Adrenal gland (tissue), 19 donors: ENCODE measurements at regions of chr5 and their contacts with region 1.

Region 1: GRCh38 chr5:140244525-140245025 is 58.3 kb downstream of the PFDN1 start:
- DNase-seq: peak; percentile 92 to 97 (median 96)
- H3K4me3 ChIP-seq: no peak overlapping the region
- H3K27ac ChIP-seq: peak overlapping the region in 1 of 5 donors; percentile 3
- H3K4me1 ChIP-seq: peaks cover 40 to 62% of the 10 kb centered on the region in 2 donors
- H3K27me3 ChIP-seq: no peaks in the 10 kb centered on the region
- CTCF ChIP-seq: peak; percentile 81 to 98 (median 92)
- POLR2A ChIP-seq: no peak

Region 2: GRCh38 chr5:140169410-140169809 is 75.2 kb before region 1 on chr5:
- intact Hi-C with region 1: loop called in 1 of 2 experiments (anchors 5 kb)
- DNase-seq: peak in 1 of 7 donors; percentile 20
- H3K4me3 ChIP-seq: no peak overlapping the region
- H3K27ac ChIP-seq: no peak overlapping the region
- H3K4me1 ChIP-seq: peaks cover 13 to 16% of the 10 kb centered on the region in 2 donors
- H3K27me3 ChIP-seq: no peaks in the 10 kb centered on the region
- CTCF ChIP-seq: peak in 4 of 6 experiments; percentile 21 to 33 (median 27)
- POLR2A ChIP-seq: no peak

Region 3: DNA sequence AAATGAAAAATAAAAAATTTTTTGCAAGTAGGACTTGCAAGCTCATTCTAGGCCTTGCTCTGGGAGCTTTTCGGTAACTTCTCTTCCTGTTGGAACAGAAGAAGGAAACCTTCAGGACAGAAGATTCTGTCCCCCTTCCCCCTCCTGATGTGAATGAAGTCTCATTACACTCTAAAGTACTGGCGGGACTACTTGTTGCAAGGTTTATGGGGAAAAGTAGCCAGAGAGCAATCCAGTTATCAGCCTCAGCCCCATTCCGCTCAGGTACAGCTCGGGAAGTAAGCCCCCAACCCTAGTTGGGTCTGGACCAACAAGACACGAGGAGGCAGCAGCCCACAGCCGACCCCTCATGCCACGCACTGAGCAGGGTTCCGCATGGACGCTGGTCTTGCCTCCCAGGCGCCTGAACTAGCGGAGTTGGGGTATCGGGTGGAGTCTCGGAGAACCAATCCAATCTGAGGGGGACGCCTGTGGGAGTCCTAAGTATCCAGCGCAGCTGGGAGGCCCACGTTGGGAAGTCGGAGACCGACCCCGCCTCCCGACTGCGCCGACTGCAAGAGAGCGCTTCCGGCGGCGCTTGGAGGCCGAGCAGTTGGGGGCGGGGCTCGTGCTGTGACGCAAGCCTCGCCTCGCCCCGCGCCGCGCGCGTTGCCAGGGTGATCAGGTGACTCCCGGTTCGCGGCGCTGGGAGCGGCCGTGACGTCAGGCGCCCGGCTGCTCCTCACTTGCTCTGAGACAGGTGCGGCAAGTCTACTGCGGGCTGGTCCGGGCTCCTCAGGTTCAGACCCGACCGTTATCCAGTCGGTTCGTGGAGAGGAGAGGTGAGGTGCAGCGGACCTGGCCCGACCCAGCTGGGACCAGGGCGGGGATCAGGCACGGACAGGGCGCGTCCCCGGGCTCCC is 69.9 kb before region 1 on chr5 and contains the start of gene CYSTM1:
- intact Hi-C with region 1: loop called (anchors 5 kb)
- DNase-seq: peak; percentile 95 to 98 (median 98)
- H3K4me3 ChIP-seq: peak within 1 kb of the TSS; percentile 62 to 96 (median 79)
- H3K27ac ChIP-seq: peak within 1 kb of the TSS; percentile 90 to 99 (median 97)
- H3K4me1 ChIP-seq: peaks cover 18 to 36% of the 10 kb centered on the region in 2 donors
- H3K27me3 ChIP-seq: no peaks in the 10 kb centered on the region
- CTCF ChIP-seq: no peak
- POLR2A ChIP-seq: peak; percentile 52 to 93
- total RNA-seq, gene CYSTM1: 42.6 to 605 (median 180) TPM

Region 4: DNA sequence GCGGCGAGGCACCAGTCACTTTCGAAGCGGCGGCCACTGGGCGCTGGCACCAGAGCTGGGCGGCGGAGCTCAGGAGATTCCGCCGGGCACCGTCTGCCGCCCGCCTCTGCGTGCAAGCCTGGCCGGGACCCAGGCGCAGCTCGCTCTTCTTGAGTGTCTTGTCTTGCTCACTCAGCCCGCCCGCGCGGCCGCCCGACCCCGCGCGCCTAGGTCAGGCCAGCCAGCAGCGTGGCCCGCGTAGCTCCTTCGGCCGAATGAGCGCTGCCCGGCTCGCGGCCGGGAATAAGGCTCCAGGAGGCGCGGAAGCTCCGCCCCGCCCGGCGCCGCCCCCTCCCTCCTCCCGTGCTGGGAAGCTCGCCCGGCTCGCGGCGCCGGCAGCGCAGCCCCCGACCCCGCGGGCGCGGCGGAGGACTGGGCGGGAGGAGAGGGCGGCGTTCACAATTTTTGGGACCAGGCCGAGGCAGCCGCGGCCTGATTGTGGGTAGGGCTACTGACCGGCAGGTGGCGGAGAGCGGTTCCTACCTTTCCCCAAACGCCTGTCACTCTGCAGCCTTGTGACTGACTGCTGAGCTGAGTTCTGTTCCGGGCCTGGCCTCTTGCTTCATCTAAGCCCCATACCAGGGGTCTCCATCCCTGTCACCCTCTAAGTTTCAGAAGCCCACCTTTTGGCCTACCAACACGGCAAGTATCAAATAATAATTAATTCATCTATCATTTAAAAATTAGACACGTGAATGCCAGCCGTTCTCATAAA is 102.0 kb after region 1 on chr5 and contains the start of gene HBEGF:
- intact Hi-C with region 1: loop called (anchors 2 to 5 kb)
- DNase-seq: peak; percentile 76 to 89 (median 82)
- H3K4me3 ChIP-seq: peak within 1 kb of the TSS; percentile 40 to 81 (median 52)
- H3K27ac ChIP-seq: peak within 1 kb of the TSS; percentile 53 to 91 (median 85)
- H3K4me1 ChIP-seq: peaks cover 19 to 24% of the 10 kb centered on the region in 2 donors
- H3K27me3 ChIP-seq: no peaks in the 10 kb centered on the region
- CTCF ChIP-seq: peak in 5 of 6 experiments; percentile 29 to 57 (median 43)
- POLR2A ChIP-seq: peak; percentile 90 to 94
- total RNA-seq, gene HBEGF: 0.54 to 9.8 (median 4.7) TPM

Region 5: GRCh38 chr5:140800816-140801493 is 556.4 kb after region 1 on chr5 and contains the start of gene PCDHA3:
- intact Hi-C with region 1: no loop called
- DNase-seq: no peak
- H3K4me3 ChIP-seq: peak within 1 kb of the TSS in 1 of 4 donors; percentile 1
- H3K27ac ChIP-seq: no peak within 1 kb of the TSS
- H3K4me1 ChIP-seq: no peaks in the 10 kb centered on the region
- H3K27me3 ChIP-seq: no peaks in the 10 kb centered on the region
- CTCF ChIP-seq: no peak
- POLR2A ChIP-seq: no peak
- total RNA-seq, gene PCDHA3: 0.10 to 1.4 (median 0.31) TPM in 7 of 9 donors, not detected in the others